ENCODE measurements at regions of chr19 and their contacts with region 1.

Region 1: DNA sequence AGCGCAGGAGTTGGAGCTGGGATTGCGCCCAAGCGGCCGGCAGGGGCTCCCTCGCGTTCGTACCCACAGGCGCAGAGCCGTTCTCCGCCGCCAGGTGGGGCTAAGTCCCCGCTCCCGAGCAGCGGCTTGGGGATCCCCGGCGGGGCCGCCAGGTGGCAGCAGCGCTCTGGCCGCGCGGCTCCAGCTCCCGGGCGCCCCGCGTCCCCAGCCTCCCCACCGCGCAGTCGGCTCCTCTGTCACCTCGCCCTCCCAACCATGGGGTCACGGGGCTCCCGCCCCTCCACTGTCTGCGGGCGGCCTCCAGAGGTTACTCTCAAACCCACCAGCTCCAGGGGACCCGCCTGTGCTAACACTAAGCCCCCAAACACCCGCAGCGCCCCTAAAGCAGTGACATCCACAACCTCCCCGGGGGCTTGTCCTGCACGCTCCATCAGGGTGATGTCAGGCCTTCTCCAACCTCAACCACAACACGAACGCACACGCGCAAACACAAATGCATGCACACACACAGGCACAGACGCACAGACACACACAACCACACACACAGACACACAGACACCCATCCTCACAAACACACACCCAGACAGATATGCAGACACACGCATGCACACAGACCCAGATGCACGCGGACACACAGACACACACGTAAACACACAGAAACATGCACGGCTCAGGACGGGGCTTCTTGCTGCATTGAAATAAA is 18.4 kb upstream of the KCTD15 start:
- DNase-seq: peak; percentile 80 to 89
- ATAC-seq: peak; percentile 93 to 97 (median 94)
- H3K4me3 ChIP-seq: peak overlapping the region; percentile 18
- H3K27ac ChIP-seq: no peak overlapping the region
- H3K4me1 ChIP-seq: no peaks in the 10 kb centered on the region
- H3K27me3 ChIP-seq: peaks cover 0 to 47% (median 6%) of the 10 kb centered on the region in 3 donors
- CTCF ChIP-seq: peak; percentile 100

Region 2: DNA sequence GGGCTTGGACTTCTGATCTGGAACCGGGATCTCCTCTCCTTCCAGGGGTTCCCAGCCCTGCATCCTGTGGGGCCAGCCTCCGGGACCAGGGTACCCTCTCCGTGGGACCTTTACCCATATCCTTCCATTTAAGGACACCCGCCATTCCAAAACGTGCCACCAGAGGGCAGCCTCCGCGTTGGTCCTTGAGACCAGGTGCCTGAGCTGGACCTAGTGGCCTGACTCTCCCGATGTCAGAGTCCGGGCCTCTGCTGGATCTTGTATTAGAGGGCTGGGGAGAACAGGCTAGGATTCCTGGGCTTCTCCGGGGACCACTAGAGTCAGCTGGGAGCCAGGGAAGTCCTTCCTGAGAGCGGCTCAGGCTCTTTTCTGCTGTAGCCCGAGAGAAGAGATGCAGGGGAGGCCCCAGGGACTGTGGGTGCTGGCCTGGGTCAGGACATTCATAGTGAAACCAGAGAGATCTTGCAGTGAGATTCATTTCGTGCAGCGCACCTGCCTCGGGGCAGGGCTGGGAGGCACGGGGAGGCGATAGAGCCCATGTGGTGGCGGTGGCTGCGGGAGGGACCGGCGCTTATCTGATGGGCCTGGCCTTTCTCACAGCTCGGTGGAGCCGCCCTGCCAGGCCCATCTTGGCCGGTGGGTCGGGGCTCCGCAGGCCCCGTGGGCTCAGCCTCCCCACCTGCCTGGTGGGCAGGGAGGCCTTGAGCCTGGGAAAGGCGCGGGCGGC is 542.8 kb before region 1 on chr19:
- intact Hi-C with region 1: loop called (anchors 5 to 10 kb)
- DNase-seq: peak; percentile 76 to 87
- ATAC-seq: peak; percentile 78 to 86 (median 79)
- H3K4me3 ChIP-seq: no peak overlapping the region
- H3K27ac ChIP-seq: no peak overlapping the region
- H3K4me1 ChIP-seq: no peaks in the 10 kb centered on the region
- H3K27me3 ChIP-seq: peaks cover 0 to 14% (median 0%) of the 10 kb centered on the region in 3 donors
- CTCF ChIP-seq: peak; percentile 93

Region 3: GRCh38 chr19:33521480-33522370 is 256.5 kb before region 1 on chr19 and contains the start of gene PEPD:
- intact Hi-C with region 1: loop called in 1 of 2 experiments (anchors 10 kb)
- DNase-seq: peak; percentile 91 to 94
- ATAC-seq: peak; percentile 99
- H3K4me3 ChIP-seq: peak within 1 kb of the TSS; percentile 88
- H3K27ac ChIP-seq: peak within 1 kb of the TSS; percentile 71
- H3K4me1 ChIP-seq: peaks cover 10% of the 10 kb centered on the region
- H3K27me3 ChIP-seq: no peaks in the 10 kb centered on the region
- CTCF ChIP-seq: no peak
- total RNA-seq, gene PEPD: 26.3 to 37.1 (median 35.6) TPM

Region 4: GRCh38 chr19:33998739-33999345 is 220.6 kb after region 1 on chr19:
- intact Hi-C with region 1: loop called (anchors 2 to 10 kb)
- DNase-seq: no peak
- ATAC-seq: no peak
- H3K4me3 ChIP-seq: no peak overlapping the region
- H3K27ac ChIP-seq: no peak overlapping the region
- H3K4me1 ChIP-seq: no peaks in the 10 kb centered on the region
- H3K27me3 ChIP-seq: peaks cover 0 to 9% (median 0%) of the 10 kb centered on the region in 3 donors
- CTCF ChIP-seq: peak; percentile 44

Region 5: GRCh38 chr19:34094960-34095359 is 316.7 kb after region 1 on chr19:
- intact Hi-C with region 1: loop called (anchors 2 to 5 kb)
- DNase-seq: no peak
- ATAC-seq: no peak
- H3K4me3 ChIP-seq: no peak overlapping the region
- H3K27ac ChIP-seq: no peak overlapping the region
- H3K4me1 ChIP-seq: peaks cover 3% of the 10 kb centered on the region
- H3K27me3 ChIP-seq: peaks cover 0 to 4% (median 0%) of the 10 kb centered on the region in 3 donors
- CTCF ChIP-seq: no peak

Region 6: GRCh38 chr19:34145741-34146202 is 367.5 kb after region 1 on chr19:
- intact Hi-C with region 1: loop called (anchors 5 to 10 kb)
- DNase-seq: no peak
- ATAC-seq: peak in 3 of 4 donors; percentile 46 to 63 (median 58)
- H3K4me3 ChIP-seq: no peak overlapping the region
- H3K27ac ChIP-seq: no peak overlapping the region
- H3K4me1 ChIP-seq: no peaks in the 10 kb centered on the region
- H3K27me3 ChIP-seq: no peaks in the 10 kb centered on the region
- CTCF ChIP-seq: peak; percentile 76

Region 7: GRCh38 chr19:34722353-34722752 is 944.1 kb after region 1 on chr19:
- intact Hi-C with region 1: loop called in 1 of 2 experiments (anchors 10 kb)
- DNase-seq: no peak
- ATAC-seq: no peak
- H3K4me3 ChIP-seq: no peak overlapping the region
- H3K27ac ChIP-seq: no peak overlapping the region
- H3K4me1 ChIP-seq: no peaks in the 10 kb centered on the region
- H3K27me3 ChIP-seq: peaks cover 2 to 4% (median 4%) of the 10 kb centered on the region in 3 donors
- CTCF ChIP-seq: no peak

Measured in psoas muscle (tissue), 8 donors.